Sigmoid colon (tissue), 7 donors: ENCODE measurements at regions of chr7 and their contacts with region 1.

Region 1: GRCh38 chr7:91034459-91035368 is 229.5 kb upstream of the FZD1 start:
- DNase-seq: no peak
- H3K4me3 ChIP-seq: no peak overlapping the region
- H3K27ac ChIP-seq: no peak overlapping the region
- H3K4me1 ChIP-seq: no peaks in the 10 kb centered on the region
- H3K27me3 ChIP-seq: no peaks in the 10 kb centered on the region
- CTCF ChIP-seq: peak in 3 of 4 experiments; percentile 36 to 55 (median 52)
- EP300 ChIP-seq: no peak
- POLR2A ChIP-seq: no peak

Region 2: GRCh38 chr7:90455163-90456030 is 579.3 kb before region 1 on chr7:
- intact Hi-C with region 1: loop called (anchors 2 kb)
- DNase-seq: no peak
- H3K4me3 ChIP-seq: peak overlapping the region in 2 of 4 donors; percentile 20 to 31
- H3K27ac ChIP-seq: no peak overlapping the region
- H3K4me1 ChIP-seq: peaks cover 0 to 2% (median 0%) of the 10 kb centered on the region in 4 donors
- H3K27me3 ChIP-seq: no peaks in the 10 kb centered on the region
- CTCF ChIP-seq: peak; percentile 34 to 70 (median 64)
- EP300 ChIP-seq: no peak
- POLR2A ChIP-seq: no peak

Region 3: GRCh38 chr7:90552521-90552920 is 482.2 kb before region 1 on chr7:
- intact Hi-C with region 1: loop called (anchors 5 kb)
- DNase-seq: no peak
- H3K4me3 ChIP-seq: no peak overlapping the region
- H3K27ac ChIP-seq: no peak overlapping the region
- H3K4me1 ChIP-seq: no peaks in the 10 kb centered on the region
- H3K27me3 ChIP-seq: no peaks in the 10 kb centered on the region
- CTCF ChIP-seq: peak in 2 of 4 experiments; percentile 5 to 18
- EP300 ChIP-seq: no peak
- POLR2A ChIP-seq: no peak

Region 4: DNA sequence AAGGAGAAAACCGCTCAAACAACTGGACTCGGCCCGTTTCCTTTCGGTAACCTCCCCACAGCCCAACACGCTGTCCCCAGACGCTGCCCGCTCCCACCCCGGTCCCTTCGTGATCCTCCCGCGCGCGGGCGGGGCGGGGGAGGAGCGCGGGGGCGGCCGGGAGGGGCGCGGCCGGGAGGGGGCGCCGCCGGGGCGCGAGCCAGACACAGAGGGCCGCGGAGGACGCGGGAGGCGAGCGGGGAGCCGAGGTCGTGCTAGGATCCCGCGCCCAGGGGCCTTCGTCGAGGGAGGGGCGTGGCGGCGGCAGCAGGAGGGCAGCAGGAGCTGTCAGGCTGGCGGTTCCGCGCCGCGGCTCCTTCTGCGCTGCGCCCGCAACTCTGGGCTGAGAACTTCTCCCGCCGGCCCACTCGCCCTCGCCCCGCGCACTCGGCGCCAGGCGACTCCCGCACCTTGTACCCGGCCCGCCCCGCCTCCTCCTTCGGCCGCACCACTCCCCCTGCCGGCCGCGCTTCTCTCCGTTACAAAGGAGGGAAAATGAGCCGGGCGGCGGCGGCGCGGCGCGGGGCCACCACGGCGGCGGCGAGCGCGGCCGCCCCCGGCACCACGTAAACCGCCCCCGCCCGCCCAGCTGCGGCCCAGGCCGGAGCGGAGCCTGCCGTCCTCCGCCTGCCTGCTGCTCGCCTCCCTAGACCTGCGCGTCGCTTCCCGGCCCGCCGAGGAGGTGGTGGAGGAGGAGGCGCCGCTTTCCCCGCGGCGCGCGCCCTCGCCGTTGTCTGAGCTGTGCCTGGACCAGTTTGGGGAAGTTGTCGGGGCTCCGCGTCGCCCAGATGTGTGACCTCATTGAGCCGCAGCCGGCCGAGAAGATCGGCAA is 438.7 kb before region 1 on chr7 and contains the start of gene CDK14:
- intact Hi-C with region 1: loop called (anchors 10 kb)
- DNase-seq: peak; percentile 90
- H3K4me3 ChIP-seq: peak within 1 kb of the TSS; percentile 60 to 84 (median 70)
- H3K27ac ChIP-seq: peak within 1 kb of the TSS; percentile 79 to 86 (median 85)
- H3K4me1 ChIP-seq: peaks cover 0 to 24% (median 7%) of the 10 kb centered on the region in 4 donors
- H3K27me3 ChIP-seq: no peaks in the 10 kb centered on the region
- CTCF ChIP-seq: peak in 2 of 4 experiments; percentile 6 to 35
- EP300 ChIP-seq: no peak
- POLR2A ChIP-seq: no peak
- total RNA-seq, gene CDK14: 11.1 to 19.3 (median 16.4) TPM